Calu3 (cell line): ENCODE measurements at regions of chr3 and their contacts with region 1.

Region 1: GRCh38 chr3:101573449-101574387 is at the start of gene PCNP:
- DNase-seq: peak; percentile 98
- H3K4me3 Mint-ChIP-seq: peak within 1 kb of the TSS; percentile 97
- H3K27ac Mint-ChIP-seq: peak within 1 kb of the TSS; percentile 99
- H3K4me1 Mint-ChIP-seq: peaks cover 22% of the 10 kb centered on the region
- H3K27me3 Mint-ChIP-seq: no peaks in the 10 kb centered on the region
- CTCF ChIP-seq: peak; percentile 74
- total RNA-seq, gene PCNP: 135 and 147 TPM in 2 replicates

Region 2: GRCh38 chr3:101495552-101495951 is 78.2 kb before region 1 on chr3:
- CTCF ChIA-PET with region 1: no interaction called
- intact Hi-C with region 1: no loop called
- DNase-seq: no peak
- H3K4me3 Mint-ChIP-seq: no peak overlapping the region
- H3K27ac Mint-ChIP-seq: no peak overlapping the region
- H3K4me1 Mint-ChIP-seq: no peaks in the 10 kb centered on the region
- H3K27me3 Mint-ChIP-seq: no peaks in the 10 kb centered on the region
- CTCF ChIP-seq: no peak

Region 3: GRCh38 chr3:101512646-101513418 is 60.9 kb before region 1 on chr3 and contains the start of gene SENP7:
- CTCF ChIA-PET with region 1: interaction called, 4 read pairs
- intact Hi-C with region 1: loop called (anchors 5 kb)
- DNase-seq: peak; percentile 80
- H3K4me3 Mint-ChIP-seq: peak within 1 kb of the TSS; percentile 99
- H3K27ac Mint-ChIP-seq: peak within 1 kb of the TSS; percentile 99
- H3K4me1 Mint-ChIP-seq: peaks cover 8% of the 10 kb centered on the region
- H3K27me3 Mint-ChIP-seq: no peaks in the 10 kb centered on the region
- CTCF ChIP-seq: no peak
- total RNA-seq, gene SENP7: 11.9 and 12.0 TPM in 2 replicates

Region 4: GRCh38 chr3:101676765-101677435 is 103.2 kb after region 1 on chr3 and contains the start of gene ZBTB11:
- CTCF ChIA-PET with region 1: interaction called, 4 read pairs
- intact Hi-C with region 1: loop called (anchors 5 kb)
- DNase-seq: peak; percentile 99
- H3K4me3 Mint-ChIP-seq: peak within 1 kb of the TSS; percentile 80
- H3K27ac Mint-ChIP-seq: peak within 1 kb of the TSS; percentile 85
- H3K4me1 Mint-ChIP-seq: peaks cover 23% of the 10 kb centered on the region
- H3K27me3 Mint-ChIP-seq: no peaks in the 10 kb centered on the region
- CTCF ChIP-seq: no peak
- total RNA-seq, gene ZBTB11: 34.8 and 36.5 TPM in 2 replicates